MCF 10A (cell line): ENCODE measurements at regions of chr4 and their contacts with region 1.

Region 1: DNA sequence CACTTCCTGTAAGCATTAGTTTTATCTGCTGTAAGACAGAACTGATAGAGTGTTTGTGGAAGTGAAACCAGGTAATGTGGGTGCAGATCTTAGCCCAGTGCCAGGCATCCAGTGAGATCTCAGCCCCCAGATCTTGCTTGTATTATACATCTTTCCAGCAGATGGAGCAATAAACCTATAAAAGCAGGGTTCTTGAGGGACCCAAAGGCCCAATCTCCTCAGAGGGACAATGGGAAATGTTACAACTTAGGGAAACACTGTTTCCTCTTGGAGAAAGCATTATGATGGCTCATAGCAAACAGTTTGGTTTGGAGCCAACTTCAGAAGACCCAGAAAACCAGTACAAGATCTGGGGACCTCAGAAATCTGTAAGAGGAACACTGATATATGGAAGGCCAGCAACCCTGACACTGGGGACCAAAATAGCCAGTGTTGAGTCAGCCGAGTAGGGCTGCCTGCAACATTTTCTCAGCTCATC is 206.3 kb downstream of the SLC7A11 start:
- DNase-seq: peak; percentile 72
- H3K4me3 Mint-ChIP-seq: no peak overlapping the region
- H3K27ac Mint-ChIP-seq: peak overlapping the region; percentile 35
- H3K4me1 Mint-ChIP-seq: peaks cover 19% of the 10 kb centered on the region
- H3K27me3 Mint-ChIP-seq: no peaks in the 10 kb centered on the region
- CTCF ChIP-seq: peak; percentile 69

Region 2: GRCh38 chr4:137819964-137820383 is 215.8 kb before region 1 on chr4:
- CTCF ChIA-PET with region 1: interaction called, 61 read pairs
- POLR2A ChIA-PET with region 1: interaction called, 4 read pairs
- intact Hi-C with region 1: loop called (anchors 1 kb)
- DNase-seq: peak; percentile 80
- H3K4me3 Mint-ChIP-seq: no peak overlapping the region
- H3K27ac Mint-ChIP-seq: no peak overlapping the region
- H3K4me1 Mint-ChIP-seq: peaks cover 12% of the 10 kb centered on the region
- H3K27me3 Mint-ChIP-seq: no peaks in the 10 kb centered on the region
- CTCF ChIP-seq: peak; percentile 78

Region 3: GRCh38 chr4:138078751-138079520 is 43.1 kb after region 1 on chr4:
- CTCF ChIA-PET with region 1: interaction called, 11 read pairs
- POLR2A ChIA-PET with region 1: no interaction called
- intact Hi-C with region 1: no loop called
- DNase-seq: no peak
- H3K4me3 Mint-ChIP-seq: no peak overlapping the region
- H3K27ac Mint-ChIP-seq: no peak overlapping the region
- H3K4me1 Mint-ChIP-seq: no peaks in the 10 kb centered on the region
- H3K27me3 Mint-ChIP-seq: no peaks in the 10 kb centered on the region
- CTCF ChIP-seq: no peak

Region 4: DNA sequence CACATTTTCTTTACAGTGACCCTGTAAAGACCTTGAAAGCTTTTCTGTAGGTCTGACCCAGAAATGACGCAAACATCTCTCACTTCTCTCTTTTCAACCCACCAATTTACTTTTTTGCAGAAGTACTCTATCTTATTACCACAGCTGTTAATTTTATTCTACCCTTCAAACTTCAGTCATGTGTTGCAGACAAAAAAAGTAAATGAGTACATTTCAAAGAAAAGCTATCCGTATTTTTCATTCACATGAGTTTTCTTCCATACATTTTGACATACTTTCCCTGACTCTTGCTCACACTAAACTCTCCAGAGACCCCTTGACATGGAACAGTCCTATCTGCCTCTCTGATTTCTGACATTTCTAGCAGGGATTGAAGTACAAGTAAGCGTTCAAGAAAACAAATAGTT is 154.6 kb after region 1 on chr4:
- CTCF ChIA-PET with region 1: interaction called, 29 read pairs
- POLR2A ChIA-PET with region 1: interaction called, 7 read pairs
- intact Hi-C with region 1: loop called (anchors 5 kb)
- DNase-seq: no peak
- H3K4me3 Mint-ChIP-seq: no peak overlapping the region
- H3K27ac Mint-ChIP-seq: no peak overlapping the region
- H3K4me1 Mint-ChIP-seq: peaks cover 11% of the 10 kb centered on the region
- H3K27me3 Mint-ChIP-seq: no peaks in the 10 kb centered on the region
- CTCF ChIP-seq: no peak

Region 5: DNA sequence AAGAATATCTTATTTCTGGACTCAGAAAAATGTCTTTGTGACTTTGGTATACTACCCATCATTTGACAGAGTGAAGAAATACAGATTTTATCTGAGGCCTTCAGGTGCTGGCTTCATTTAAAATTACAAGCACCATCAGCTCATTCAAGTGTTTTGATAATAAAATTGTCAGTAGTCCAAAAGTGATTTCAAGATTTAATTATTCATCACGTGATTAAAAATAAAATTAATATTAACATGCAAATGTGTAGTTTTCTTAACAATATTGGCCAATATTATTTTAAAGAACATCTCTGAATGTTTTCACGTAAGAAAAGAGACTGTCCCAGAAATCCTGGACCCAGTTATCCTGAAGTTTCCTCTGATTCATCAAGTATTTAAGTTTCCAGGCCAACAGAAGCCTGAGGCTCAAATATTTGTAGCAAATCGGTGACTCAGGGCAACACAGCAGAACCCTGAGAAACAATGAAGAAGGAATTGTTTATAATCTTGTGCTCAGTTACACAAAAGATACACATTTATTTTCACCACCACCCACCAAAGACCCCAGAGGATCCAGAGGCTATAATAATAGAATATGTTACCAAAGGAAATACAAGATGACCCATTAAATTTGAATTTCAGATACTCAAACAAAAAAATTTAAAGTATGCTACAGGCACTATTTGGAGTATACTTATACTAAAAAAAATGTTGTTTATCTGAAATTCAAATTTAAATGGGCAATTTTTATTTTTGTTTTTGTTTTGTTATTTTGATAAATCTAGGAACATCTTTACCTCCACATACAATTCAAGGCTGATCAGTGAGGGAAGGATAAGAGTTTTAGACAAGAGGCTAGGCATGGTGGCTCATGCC is 240.2 kb after region 1 on chr4:
- CTCF ChIA-PET with region 1: no interaction called
- POLR2A ChIA-PET with region 1: no interaction called
- intact Hi-C with region 1: no loop called
- DNase-seq: peak; percentile 79
- H3K4me3 Mint-ChIP-seq: no peak overlapping the region
- H3K27ac Mint-ChIP-seq: peak overlapping the region; percentile 93
- H3K4me1 Mint-ChIP-seq: peaks cover 6% of the 10 kb centered on the region
- H3K27me3 Mint-ChIP-seq: no peaks in the 10 kb centered on the region
- CTCF ChIP-seq: no peak

Region 6: DNA sequence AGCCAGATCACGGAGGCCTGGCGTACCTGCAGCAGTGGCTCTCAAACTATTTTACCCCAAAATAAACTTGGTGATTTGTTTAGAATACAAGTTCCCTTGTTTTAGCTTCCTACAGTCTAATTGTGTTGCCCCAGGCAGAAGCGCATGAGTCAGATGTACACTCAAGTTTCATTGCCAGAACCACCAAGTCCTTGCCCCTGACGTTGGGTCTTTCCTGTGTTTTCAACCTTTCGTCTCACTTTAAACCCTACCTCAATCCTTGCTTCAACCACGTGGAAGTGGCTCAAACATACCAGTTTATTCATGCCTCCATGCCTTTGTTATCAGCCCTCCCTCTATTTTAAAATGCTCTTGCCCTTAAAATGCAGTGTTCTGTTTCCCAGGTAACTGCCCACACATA is 272.6 kb after region 1 on chr4:
- CTCF ChIA-PET with region 1: no interaction called
- POLR2A ChIA-PET with region 1: no interaction called
- intact Hi-C with region 1: no loop called
- DNase-seq: peak; percentile 96
- H3K4me3 Mint-ChIP-seq: peak overlapping the region; percentile 2
- H3K27ac Mint-ChIP-seq: peak overlapping the region; percentile 89
- H3K4me1 Mint-ChIP-seq: peaks cover 35% of the 10 kb centered on the region
- H3K27me3 Mint-ChIP-seq: no peaks in the 10 kb centered on the region
- CTCF ChIP-seq: no peak

Region 7: GRCh38 chr4:138576684-138577083 is 540.9 kb after region 1 on chr4:
- CTCF ChIA-PET with region 1: interaction called, 23 read pairs
- POLR2A ChIA-PET with region 1: no interaction called
- intact Hi-C with region 1: loop called (anchors 1 kb)
- DNase-seq: peak; percentile 58
- H3K4me3 Mint-ChIP-seq: no peak overlapping the region
- H3K27ac Mint-ChIP-seq: no peak overlapping the region
- H3K4me1 Mint-ChIP-seq: no peaks in the 10 kb centered on the region
- H3K27me3 Mint-ChIP-seq: no peaks in the 10 kb centered on the region
- CTCF ChIP-seq: peak; percentile 51

Region 8: DNA sequence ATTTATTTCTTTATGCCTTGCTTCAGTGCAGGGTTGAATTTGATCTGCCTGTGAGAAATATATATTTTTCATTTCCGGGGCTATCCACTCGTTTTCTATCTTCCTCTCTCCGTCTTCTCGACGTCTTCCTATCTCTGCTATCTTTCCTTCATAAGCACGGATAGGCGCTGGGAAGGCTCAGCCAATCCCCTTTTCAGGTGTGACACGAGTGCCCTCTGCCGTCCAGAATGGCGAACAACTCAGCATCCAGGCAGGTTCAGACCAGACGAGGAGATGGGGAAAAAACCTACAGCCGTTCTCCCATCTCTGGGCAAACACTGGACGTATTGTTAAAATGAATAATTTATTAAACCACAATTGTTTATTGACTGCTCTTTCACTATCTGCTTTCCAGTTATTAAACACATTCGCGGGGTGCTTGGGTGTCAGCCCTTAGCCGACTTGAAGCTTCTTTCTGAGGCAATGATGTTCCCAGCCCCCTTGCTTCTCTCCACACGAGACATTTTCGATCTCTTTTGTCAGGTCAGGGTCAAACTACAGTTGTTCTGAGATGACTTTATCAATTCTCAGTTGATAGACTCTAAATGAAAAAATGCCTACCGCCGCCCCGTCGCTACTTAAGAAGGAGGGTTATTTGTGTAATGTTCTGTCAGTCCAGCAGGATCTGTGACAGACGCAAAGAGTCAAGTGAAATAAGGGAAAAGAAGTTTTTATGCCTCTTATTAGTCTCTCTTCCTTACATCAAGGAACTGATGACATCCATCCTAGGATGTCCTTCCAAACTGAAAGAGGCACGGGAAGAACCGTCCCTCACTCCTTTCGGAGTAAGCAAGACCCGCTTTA is 883.5 kb after region 1 on chr4:
- CTCF ChIA-PET with region 1: interaction called, 4 read pairs
- POLR2A ChIA-PET with region 1: no interaction called
- intact Hi-C with region 1: loop called (anchors 10 kb)
- DNase-seq: peak; percentile 85
- H3K4me3 Mint-ChIP-seq: no peak overlapping the region
- H3K27ac Mint-ChIP-seq: no peak overlapping the region
- H3K4me1 Mint-ChIP-seq: peaks cover 7% of the 10 kb centered on the region
- H3K27me3 Mint-ChIP-seq: no peaks in the 10 kb centered on the region
- CTCF ChIP-seq: peak; percentile 71

Region 9: DNA sequence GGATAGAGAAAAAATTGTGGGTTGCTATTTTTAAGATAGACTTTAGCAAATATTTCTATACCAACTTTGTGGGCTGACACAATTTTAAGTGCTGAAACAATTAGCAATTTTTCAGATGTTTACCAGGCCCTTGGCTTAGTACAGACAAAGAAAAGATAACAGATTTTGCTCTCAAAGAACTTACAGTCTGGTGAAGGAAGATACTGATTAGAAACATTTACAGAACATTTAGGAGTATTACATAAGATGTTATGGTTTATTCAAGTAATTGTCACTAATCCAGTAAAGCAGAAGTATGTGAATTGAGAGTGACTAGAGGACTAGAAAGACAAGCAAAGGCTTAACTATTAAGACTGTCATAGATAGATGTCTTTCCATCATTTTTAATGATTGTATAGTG is 1301.8 kb after region 1 on chr4:
- CTCF ChIA-PET with region 1: no interaction called
- POLR2A ChIA-PET with region 1: no interaction called
- intact Hi-C with region 1: no loop called
- DNase-seq: no peak
- H3K4me3 Mint-ChIP-seq: no peak overlapping the region
- H3K27ac Mint-ChIP-seq: peak overlapping the region; percentile 17
- H3K4me1 Mint-ChIP-seq: peaks cover 6% of the 10 kb centered on the region
- H3K27me3 Mint-ChIP-seq: no peaks in the 10 kb centered on the region
- CTCF ChIP-seq: no peak